ENCODE measurements at regions of chr19 and their contacts with region 1.

Region 1: DNA sequence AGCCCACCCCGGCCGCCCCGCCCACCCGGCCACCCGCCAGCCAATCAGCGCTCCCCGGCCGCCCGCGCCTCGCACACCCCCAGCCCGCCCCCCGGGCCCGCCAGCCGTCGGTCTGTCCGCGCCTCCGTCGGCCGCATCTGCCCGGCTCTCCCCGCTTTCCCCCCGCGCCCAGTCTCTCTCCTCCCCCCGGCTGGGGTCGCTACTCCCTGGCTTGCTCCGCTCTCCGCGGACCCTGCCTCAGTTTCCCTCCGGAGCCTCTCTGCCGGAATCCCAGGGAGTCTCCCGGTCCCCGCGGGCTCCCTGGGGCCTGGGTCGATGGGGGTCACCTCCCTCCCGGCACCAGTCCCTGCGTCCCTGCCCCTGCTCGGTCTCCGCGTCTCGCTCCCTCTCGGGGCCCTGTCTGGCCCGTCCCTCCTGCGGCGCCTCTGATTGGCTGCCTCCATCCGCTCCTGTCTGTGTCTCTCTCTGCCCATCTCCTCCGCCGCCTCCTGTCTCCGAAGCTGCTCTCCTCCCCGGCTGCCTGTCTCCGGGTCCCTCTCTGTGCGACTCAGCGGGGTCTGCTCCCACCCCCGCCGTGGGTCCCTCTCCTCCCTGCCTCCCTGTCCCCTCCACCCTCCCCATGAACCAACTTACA is 475 bp downstream of the IL11 start:
- DNase-seq: peak in 1 of 2 experiments; percentile 87
- H3K4me3 ChIP-seq: peak overlapping the region; percentile 24 to 71 (median 46)
- H3K27ac ChIP-seq: no peak overlapping the region
- H3K4me1 ChIP-seq: peaks cover 0 to 31% (median 24%) of the 10 kb centered on the region in 4 experiments; a peak in 6 of 7 replicates
- H3K27me3 ChIP-seq: peaks cover 16 to 52% (median 43%) of the 10 kb centered on the region in 4 experiments
- CTCF ChIP-seq: no peak
- EP300 ChIP-seq: no peak
- POLR2A ChIP-seq: no peak
- RAD21 ChIP-seq: no peak

Region 2: GRCh38 chr19:55353803-55354697 is 15.7 kb before region 1 on chr19:
- CTCF ChIA-PET with region 1: interaction called, 9 read pairs
- POLR2A ChIA-PET with region 1: interaction called, 58 read pairs
- DNase-seq: peak in 1 of 2 experiments; percentile 92
- H3K4me3 ChIP-seq: peak overlapping the region; percentile 32 to 66 (median 50)
- H3K27ac ChIP-seq: no peak overlapping the region
- H3K4me1 ChIP-seq: peaks cover 0 to 27% (median 13%) of the 10 kb centered on the region in 4 experiments; a peak in 6 of 7 replicates
- H3K27me3 ChIP-seq: peaks cover 17 to 56% (median 44%) of the 10 kb centered on the region in 4 experiments
- CTCF ChIP-seq: no peak
- EP300 ChIP-seq: no peak
- POLR2A ChIP-seq: no peak; a peak in 1 of 3 replicates
- RAD21 ChIP-seq: no peak; a peak in 1 of 4 replicates

Region 3: DNA sequence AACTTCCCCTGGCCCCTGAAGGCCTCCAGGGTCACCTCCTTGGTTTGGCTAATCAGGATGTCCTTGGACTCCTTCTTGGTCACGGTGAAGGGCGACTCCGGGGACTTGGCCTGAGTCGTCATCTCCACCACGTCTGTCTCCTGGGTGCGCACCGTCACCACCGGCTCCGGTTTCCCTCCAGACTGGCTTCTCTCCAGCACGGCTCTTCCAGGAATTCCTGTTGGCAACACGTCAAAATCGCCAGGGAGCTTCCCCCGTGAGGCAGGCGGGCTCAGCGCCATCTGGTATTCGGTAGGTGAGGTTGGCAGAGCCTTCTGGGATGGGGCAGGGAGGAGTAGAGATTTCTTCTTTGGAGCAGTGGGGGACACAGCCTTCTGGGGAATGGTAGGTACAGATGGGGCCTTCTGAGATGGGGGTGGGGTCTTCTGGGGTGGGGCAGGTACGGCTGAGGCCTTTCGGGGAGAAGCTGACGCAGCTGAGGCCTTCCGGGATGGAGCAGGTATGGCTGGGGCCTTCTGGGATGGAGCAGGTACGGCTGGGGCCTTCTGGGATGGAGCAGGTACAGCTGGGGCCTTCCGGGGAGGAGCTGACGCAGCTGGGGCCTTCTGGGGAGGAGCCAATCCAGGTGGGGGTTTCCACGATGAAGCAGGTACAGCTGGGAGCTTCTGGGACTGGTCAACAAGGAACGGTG is 10.7 kb before region 1 on chr19:
- CTCF ChIA-PET with region 1: interaction called, 9 read pairs
- POLR2A ChIA-PET with region 1: interaction called, 11 read pairs
- DNase-seq: no peak
- H3K4me3 ChIP-seq: no peak overlapping the region
- H3K27ac ChIP-seq: no peak overlapping the region
- H3K4me1 ChIP-seq: peaks cover 0 to 10% (median 7%) of the 10 kb centered on the region in 4 experiments; a peak in 6 of 7 replicates
- H3K27me3 ChIP-seq: peaks cover 2 to 31% (median 26%) of the 10 kb centered on the region in 4 experiments
- CTCF ChIP-seq: no peak
- EP300 ChIP-seq: no peak
- POLR2A ChIP-seq: no peak
- RAD21 ChIP-seq: no peak

Region 4: DNA sequence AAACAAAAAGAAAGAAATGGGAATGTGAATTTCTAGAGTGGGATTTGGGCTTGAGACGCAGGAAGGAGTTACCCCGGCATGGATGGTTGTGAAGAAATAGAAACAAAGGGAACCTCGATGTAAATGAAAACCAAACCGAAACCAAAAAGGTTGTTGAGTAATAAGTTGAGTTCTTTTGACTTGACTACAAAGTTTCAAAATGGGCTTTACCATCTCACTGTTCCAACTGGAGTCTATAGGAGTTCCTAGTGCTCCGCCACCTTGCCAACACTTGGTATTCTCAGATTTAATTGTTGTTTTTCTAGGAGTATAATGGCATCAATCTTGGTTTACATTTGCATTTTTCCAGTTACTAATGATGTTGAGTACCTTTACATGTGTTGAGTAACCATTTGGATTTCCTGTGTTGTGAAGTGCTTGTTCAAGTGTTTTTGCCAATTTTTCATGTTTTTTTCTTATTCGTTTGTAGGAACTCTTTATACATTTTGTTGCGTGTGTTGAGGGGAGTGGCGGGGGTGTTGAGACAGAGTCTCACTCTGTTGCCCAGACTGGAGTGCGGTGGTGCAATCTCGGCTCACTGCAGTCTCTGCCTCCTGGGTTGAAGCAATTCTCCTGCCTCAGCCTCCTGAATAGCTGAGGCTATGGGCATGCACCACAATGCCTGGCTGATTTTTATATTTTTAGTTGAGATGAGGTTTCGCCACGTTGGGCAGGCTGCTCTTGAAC is 28.6 kb after region 1 on chr19:
- CTCF ChIA-PET with region 1: interaction called, 3 read pairs
- POLR2A ChIA-PET with region 1: interaction called, 14 read pairs
- DNase-seq: no peak
- H3K4me3 ChIP-seq: no peak overlapping the region
- H3K27ac ChIP-seq: no peak overlapping the region
- H3K4me1 ChIP-seq: peaks cover 0 to under 1% (median under 1%) of the 10 kb centered on the region in 4 experiments; a peak in 4 of 7 replicates
- H3K27me3 ChIP-seq: no peaks in the 10 kb centered on the region
- CTCF ChIP-seq: no peak
- EP300 ChIP-seq: no peak
- POLR2A ChIP-seq: no peak
- RAD21 ChIP-seq: no peak

Measured in H1 (cell line).